ENCODE measurements at regions of chr7 and their contacts with region 1.

Region 1: DNA sequence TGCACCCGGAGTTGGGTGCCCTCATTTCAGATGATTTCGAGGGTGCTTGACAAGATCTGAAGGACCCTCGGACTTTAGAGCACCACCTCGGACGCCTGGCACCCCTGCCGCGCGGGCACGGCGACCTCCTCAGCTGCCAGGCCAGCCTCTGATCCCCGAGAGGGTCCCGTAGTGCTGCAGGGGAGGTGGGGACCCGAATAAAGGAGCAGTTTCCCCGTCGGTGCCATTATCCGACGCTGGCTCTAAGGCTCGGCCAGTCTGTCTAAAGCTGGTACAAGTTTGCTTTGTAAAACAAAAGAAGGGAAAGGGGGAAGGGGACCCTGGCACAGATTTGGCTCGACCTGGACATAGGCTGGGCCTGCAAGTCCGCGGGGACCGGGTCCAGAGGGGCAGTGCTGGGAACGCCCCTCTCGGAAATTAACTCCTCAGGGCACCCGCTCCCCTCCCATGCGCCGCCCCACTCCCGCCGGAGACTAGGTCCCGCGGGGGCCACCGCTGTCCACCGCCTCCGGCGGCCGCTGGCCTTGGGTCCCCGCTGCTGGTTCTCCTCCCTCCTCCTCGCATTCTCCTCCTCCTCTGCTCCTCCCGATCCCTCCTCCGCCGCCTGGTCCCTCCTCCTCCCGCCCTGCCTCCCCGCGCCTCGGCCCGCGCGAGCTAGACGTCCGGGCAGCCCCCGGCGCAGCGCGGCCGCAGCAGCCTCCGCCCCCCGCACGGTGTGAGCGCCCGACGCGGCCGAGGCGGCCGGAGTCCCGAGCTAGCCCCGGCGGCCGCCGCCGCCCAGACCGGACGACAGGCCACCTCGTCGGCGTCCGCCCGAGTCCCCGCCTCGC is at the start of gene EGFR:
- DNase-seq: peak; percentile 88 to 94
- ATAC-seq: peak; percentile 91
- H3K4me3 ChIP-seq: peak within 1 kb of the TSS; percentile 84 to 88
- H3K27ac ChIP-seq: peak within 1 kb of the TSS; percentile 15 to 91
- H3K4me1 ChIP-seq: no peaks in the 10 kb centered on the region
- H3K27me3 ChIP-seq: no peaks in the 10 kb centered on the region
- total RNA-seq, gene EGFR: 70.5 to 72.4 TPM

Region 2: GRCh38 chr7:54921116-54921515 is 97.5 kb before region 1 on chr7:
- intact Hi-C with region 1: no loop called
- DNase-seq: no peak
- ATAC-seq: no peak
- H3K4me3 ChIP-seq: no peak overlapping the region
- H3K27ac ChIP-seq: no peak overlapping the region
- H3K4me1 ChIP-seq: no peaks in the 10 kb centered on the region
- H3K27me3 ChIP-seq: no peaks in the 10 kb centered on the region

Region 3: DNA sequence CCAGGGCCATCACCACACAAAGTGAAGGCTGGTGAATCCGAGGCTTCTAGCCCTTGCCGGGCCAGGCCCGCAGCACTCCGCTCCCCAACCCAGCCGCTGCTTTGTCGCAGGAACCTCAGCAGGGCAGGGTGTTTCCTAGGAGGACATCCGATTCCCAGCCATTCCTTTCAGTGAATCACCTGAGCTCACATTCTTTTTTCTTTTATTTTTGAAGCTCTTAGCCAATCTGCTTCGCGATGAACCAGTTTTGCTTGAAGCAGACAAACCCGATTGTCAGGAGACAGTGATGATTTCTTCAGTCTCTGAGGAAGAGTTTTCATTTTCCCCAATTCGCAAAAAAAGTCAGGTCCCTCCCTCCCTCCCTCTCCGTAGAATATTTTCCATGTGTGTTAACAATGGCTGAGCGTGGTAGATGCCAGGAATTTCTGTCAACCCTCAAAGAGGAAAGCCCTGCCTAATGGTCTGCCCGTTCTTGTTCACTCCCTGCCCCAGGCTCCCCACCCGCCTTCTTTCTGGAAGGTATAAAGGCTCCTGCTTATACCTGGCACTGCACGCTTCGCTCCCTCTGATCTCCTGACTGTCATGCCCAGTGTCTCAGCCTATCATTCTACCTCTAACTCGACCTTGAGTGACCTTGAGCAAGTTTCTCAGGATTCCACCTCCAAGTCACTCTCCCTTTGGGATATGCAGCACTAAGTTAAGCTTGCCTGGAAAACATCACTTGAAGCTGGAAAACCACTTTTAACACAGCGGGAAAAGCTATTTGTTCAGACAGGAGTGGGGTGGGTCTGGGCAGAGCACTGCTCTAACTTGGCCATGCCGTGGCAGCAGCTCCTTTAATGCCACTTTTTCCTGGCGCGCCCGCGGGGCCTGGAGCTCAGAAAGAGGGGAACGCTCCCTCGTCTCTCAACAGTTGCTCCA is 35.3 kb after region 1 on chr7:
- intact Hi-C with region 1: loop called in 1 of 2 experiments (anchors 5 kb)
- DNase-seq: peak; percentile 58 to 73
- ATAC-seq: peak; percentile 27
- H3K4me3 ChIP-seq: no peak overlapping the region
- H3K27ac ChIP-seq: peak overlapping the region; percentile 29 to 73
- H3K4me1 ChIP-seq: peaks cover 0 to 8% of the 10 kb centered on the region in 2 donors
- H3K27me3 ChIP-seq: no peaks in the 10 kb centered on the region

Region 4: GRCh38 chr7:55073945-55074499 is 55.4 kb after region 1 on chr7:
- intact Hi-C with region 1: loop called in 1 of 2 experiments (anchors 5 kb)
- DNase-seq: no peak
- ATAC-seq: peak; percentile 42
- H3K4me3 ChIP-seq: no peak overlapping the region
- H3K27ac ChIP-seq: peak overlapping the region; percentile 47 to 81
- H3K4me1 ChIP-seq: peaks cover 5 to 7% of the 10 kb centered on the region in 2 donors
- H3K27me3 ChIP-seq: no peaks in the 10 kb centered on the region

Region 5: DNA sequence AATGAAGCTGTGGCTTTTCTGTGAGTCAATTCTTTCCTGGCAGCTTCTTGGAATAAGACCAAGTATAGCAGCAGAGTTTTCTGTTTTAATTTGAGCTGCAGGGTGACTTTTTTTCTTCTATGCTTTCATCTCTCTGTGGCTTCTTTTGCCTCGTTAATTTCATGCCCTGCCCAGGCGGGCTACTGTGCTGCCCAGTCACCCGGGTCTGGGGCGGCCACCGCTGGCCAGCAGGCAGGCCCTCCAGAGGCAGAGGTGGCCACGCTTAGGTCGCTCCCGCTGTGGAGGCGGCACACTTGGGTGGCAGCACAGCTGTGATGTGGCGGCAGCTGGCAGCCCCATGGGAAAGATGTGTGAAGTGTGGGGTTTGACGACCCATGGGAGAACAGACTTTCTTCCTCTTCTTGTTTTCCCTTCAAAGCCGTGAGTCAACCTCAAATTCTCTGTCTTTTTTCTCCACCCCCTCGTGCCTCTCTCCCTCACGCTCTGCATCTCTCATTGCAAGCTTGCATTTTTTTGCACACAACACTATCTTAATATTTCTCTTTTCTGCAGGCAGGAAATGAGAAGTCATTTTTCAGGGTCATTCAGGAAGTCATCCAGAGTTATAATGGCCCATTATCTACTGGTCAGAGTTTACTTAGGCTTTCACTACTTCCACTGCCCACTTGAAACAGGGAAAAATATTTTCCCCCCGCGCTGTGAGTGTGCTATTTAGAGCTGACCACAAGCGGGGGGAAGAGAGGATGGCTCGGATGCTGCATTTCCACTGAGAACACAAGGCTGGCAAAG is 68.0 kb after region 1 on chr7:
- intact Hi-C with region 1: loop called in 1 of 2 experiments (anchors 5 kb)
- DNase-seq: peak in 1 of 2 donors; percentile 74
- ATAC-seq: peak; percentile 71
- H3K4me3 ChIP-seq: no peak overlapping the region
- H3K27ac ChIP-seq: peak overlapping the region; percentile 37 to 76
- H3K4me1 ChIP-seq: peaks cover 3 to 6% of the 10 kb centered on the region in 2 donors
- H3K27me3 ChIP-seq: no peaks in the 10 kb centered on the region